ENCODE measurements at regions of chr17 and their contacts with region 1.

Region 1: GRCh38 chr17:78341559-78342448 is 18.1 kb downstream of the SOCS3 start:
- DNase-seq: no peak
- H3K4me3 Mint-ChIP-seq: peak overlapping the region; percentile 17
- H3K27ac Mint-ChIP-seq: no peak overlapping the region
- H3K4me1 Mint-ChIP-seq: peaks cover 76% of the 10 kb centered on the region
- H3K27me3 Mint-ChIP-seq: peaks cover 2% of the 10 kb centered on the region

Region 2: DNA sequence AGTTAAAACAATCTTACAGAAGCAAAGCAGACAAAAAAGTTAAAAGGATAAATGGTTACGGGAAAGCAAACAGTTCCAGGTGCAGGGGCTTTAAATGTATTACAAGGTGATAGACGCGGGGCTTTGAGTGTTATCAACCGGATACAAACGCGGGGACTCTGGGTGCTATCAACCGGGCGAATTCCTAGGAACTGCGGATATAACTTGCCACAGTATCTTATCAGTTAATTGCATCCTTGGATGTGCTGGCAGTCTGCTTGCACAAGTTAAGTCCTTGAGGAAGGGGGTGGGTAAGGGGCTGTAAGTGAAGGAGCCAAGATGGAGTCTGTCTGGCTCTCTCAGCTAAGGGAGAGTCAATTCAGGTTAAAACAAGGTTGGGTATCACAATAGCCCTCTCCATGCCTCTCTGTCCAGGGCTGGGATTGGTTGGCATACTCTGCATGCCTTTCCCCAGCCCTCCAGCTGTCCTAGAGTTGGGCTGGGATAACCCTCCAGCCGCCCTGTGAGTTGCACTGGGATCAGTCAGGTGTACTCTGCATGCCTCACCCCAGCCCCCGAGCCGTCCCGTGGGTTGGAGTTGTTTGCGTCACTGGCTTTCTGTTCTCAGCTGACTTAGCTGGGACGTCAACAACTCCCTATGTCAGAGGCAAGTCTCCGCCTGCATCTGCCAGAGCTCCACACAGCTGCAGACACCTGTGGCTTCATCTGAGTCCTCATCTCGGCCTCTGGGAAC is 69.5 kb before region 1 on chr17:
- CTCF ChIA-PET with region 1: no interaction called
- POLR2A ChIA-PET with region 1: no interaction called
- DNase-seq: peak; percentile 60
- H3K4me3 Mint-ChIP-seq: no peak overlapping the region
- H3K27ac Mint-ChIP-seq: no peak overlapping the region
- H3K4me1 Mint-ChIP-seq: peaks cover 35% of the 10 kb centered on the region
- H3K27me3 Mint-ChIP-seq: peaks cover 8% of the 10 kb centered on the region

Region 3: GRCh38 chr17:78313735-78314648 is 27.8 kb before region 1 on chr17:
- CTCF ChIA-PET with region 1: interaction called, 4 read pairs
- POLR2A ChIA-PET with region 1: interaction called, 29 read pairs
- DNase-seq: peak; percentile 74
- H3K4me3 Mint-ChIP-seq: peak overlapping the region; percentile 50
- H3K27ac Mint-ChIP-seq: peak overlapping the region; percentile 26
- H3K4me1 Mint-ChIP-seq: peaks cover 46% of the 10 kb centered on the region
- H3K27me3 Mint-ChIP-seq: peaks cover 27% of the 10 kb centered on the region

Region 4: DNA sequence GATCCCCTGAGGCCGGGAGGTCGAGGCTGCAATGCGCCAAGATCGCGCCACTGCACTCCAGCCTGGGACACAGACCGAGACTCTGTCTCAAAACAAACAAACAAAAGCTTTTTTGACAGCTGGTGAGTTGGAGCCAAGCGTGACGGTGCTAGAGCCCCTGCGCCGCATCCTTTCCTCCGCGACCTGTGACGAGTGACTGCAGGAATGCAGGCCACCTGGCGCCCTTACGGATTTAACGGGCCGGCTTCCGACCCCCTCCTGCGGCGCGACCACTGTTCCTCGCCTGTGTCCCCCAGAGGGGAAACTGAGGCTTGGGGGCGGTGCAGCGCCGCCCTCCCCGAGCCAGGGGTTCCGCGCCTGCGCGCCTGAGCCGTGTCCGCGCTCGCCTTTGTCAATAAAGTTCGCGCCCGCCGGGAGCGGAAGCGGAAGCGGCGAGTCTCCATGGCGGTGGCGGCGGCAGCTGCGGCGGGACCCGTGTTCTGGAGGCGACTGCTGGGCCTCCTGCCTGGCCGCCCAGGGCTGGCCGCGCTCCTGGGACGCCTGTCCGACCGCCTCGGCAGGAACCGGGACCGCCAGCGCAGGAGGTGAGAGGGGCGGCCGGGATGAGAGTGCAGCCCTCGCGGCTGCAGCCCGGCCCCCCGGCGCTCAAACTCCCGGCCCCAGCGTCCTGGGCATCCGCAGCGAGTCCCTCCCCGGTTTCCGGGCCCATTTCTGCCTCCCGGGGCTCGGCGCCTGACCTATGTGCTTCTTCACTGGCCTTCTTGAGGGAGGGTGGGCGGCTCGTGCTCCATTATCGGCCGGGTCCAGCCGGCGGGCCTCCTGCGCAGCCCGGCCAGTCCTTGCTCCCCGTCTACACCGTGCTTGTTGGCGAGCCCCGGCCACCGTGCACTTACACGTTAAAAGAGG is 36.7 kb after region 1 on chr17 and contains the start of gene PGS1:
- CTCF ChIA-PET with region 1: interaction called, 3 read pairs
- POLR2A ChIA-PET with region 1: interaction called, 17 read pairs
- DNase-seq: peak; percentile 88
- H3K4me3 Mint-ChIP-seq: peak within 1 kb of the TSS; percentile 98
- H3K27ac Mint-ChIP-seq: peak within 1 kb of the TSS; percentile 91
- H3K4me1 Mint-ChIP-seq: peaks cover 45% of the 10 kb centered on the region
- H3K27me3 Mint-ChIP-seq: no peaks in the 10 kb centered on the region
- total RNA-seq, gene PGS1: 70.7 to 75.5 TPM

Region 5: DNA sequence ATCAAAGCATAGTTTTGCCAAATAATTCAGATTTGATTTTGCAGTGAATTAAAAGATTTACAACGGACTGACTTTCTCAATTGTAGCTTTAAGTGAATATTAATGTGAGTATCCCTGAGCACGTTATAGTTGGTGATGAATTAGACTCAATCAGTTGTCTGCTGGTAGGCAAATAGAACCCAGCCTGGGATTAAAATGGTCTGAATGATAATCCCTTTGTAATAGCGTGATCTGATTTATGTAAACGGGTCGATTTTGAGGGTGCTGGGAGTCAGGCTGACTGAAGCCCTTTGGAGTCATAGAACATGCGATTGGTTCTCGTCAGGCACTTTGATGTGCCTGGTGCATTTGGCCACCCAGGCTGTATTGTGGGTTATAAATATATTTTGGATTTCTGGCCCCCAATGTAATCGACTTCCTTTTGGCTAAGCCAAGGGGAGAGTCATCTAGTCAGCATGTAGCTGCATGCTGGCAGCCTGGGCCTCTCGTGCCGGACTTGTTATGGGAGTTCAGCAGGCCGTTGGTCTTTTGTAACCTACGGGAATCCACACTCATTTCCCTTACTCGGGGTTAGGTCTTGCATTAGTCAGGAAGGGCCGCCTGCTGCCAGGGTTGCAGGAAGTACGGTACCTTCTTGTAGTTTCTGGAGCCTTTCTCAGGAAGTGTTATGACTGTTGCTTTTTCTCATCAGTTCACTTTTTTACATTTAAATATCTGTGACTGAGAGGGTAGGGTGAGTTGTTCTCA is 42.1 kb after region 1 on chr17:
- CTCF ChIA-PET with region 1: interaction called, 3 read pairs
- POLR2A ChIA-PET with region 1: interaction called, 17 read pairs
- DNase-seq: peak; percentile 66
- H3K4me3 Mint-ChIP-seq: peak overlapping the region; percentile 68
- H3K27ac Mint-ChIP-seq: peak overlapping the region; percentile 91
- H3K4me1 Mint-ChIP-seq: peaks cover 87% of the 10 kb centered on the region
- H3K27me3 Mint-ChIP-seq: no peaks in the 10 kb centered on the region

Region 6: GRCh38 chr17:78397681-78398101 is 55.9 kb after region 1 on chr17:
- CTCF ChIA-PET with region 1: no interaction called
- POLR2A ChIA-PET with region 1: no interaction called
- DNase-seq: no peak
- H3K4me3 Mint-ChIP-seq: no peak overlapping the region
- H3K27ac Mint-ChIP-seq: peak overlapping the region; percentile 31
- H3K4me1 Mint-ChIP-seq: peaks cover 7% of the 10 kb centered on the region
- H3K27me3 Mint-ChIP-seq: no peaks in the 10 kb centered on the region

Measured in activated CD4-positive, alpha-beta memory T cell treated with anti-CD3 and anti-CD28 coated beads, Interleukin-2, amount 10 ng/mL, durations not matched to agents 7 days and 5 days (primary cell).